Mammary epithelial cell (primary cell): ENCODE measurements at regions of chr5 and their contacts with region 1.

Region 1: GRCh38 chr5:74240786-74241750 is 399.5 kb downstream of the ENC1 start:
- DNase-seq: peak; percentile 100
- H3K4me3 ChIP-seq: peak overlapping the region in 2 of 3 experiments; percentile 3 to 11
- H3K27ac ChIP-seq: peak overlapping the region; percentile 96
- H3K4me1 ChIP-seq: peaks cover 39% of the 10 kb centered on the region
- H3K27me3 ChIP-seq: no peaks in the 10 kb centered on the region
- CTCF ChIP-seq: no peak

Region 2: GRCh38 chr5:74127381-74128320 is 113.4 kb before region 1 on chr5:
- CTCF ChIA-PET with region 1: no interaction called
- dilution Hi-C with region 1: no loop called
- in situ Hi-C with region 1: no loop called
- intact Hi-C with region 1: no loop called
- DNase-seq: peak; percentile 48
- H3K4me3 ChIP-seq: peak overlapping the region in 2 of 3 experiments; percentile 15 to 27
- H3K27ac ChIP-seq: no peak overlapping the region
- H3K4me1 ChIP-seq: peaks cover 15% of the 10 kb centered on the region
- H3K27me3 ChIP-seq: no peaks in the 10 kb centered on the region
- CTCF ChIP-seq: peak; percentile 46 to 62

Region 3: DNA sequence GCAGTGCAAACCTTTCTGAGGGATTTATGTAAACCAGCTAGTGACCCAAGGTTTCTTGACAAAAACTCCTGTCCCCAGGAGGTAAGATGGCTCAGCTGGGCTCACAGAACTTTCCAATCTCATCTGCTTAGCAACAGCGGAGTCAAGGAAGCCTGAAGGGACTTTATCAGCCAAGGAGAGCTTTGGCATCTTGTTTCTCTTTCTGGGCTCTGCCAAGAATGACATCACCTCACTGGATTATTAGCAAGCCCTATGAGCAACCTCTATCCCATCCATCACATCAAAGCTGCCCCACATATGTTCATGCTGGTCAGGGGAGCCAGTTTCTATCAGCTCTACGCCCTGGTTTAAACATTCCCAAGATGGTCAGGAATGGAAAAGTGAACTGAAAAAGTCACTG is 61.9 kb before region 1 on chr5:
- CTCF ChIA-PET with region 1: no interaction called
- dilution Hi-C with region 1: no loop called
- in situ Hi-C with region 1: no loop called
- intact Hi-C with region 1: no loop called
- DNase-seq: peak; percentile 62
- H3K4me3 ChIP-seq: no peak overlapping the region
- H3K27ac ChIP-seq: no peak overlapping the region
- H3K4me1 ChIP-seq: no peaks in the 10 kb centered on the region
- H3K27me3 ChIP-seq: no peaks in the 10 kb centered on the region
- CTCF ChIP-seq: no peak

Region 4: DNA sequence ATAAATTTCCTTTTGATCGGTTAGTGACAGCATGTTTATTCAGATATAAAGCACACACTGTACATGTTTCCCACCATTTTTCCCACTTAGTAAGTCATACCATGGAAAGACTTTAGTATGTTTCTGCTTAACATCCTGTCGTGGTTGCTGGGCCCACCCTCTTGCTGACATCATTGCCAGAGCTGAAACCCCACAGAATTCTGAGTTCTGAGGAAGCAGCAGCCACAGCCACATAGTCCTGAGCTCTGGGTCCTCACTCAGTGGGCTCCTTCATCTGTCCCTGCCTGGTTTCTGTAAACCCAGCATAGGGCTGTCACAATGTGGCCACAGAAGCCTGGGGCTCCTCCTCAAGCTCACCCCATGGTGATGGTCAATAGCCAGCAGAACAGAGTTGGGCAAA is 42.1 kb before region 1 on chr5:
- CTCF ChIA-PET with region 1: no interaction called
- dilution Hi-C with region 1: no loop called
- in situ Hi-C with region 1: no loop called
- intact Hi-C with region 1: loop called (anchors 2 kb)
- DNase-seq: no peak
- H3K4me3 ChIP-seq: no peak overlapping the region
- H3K27ac ChIP-seq: no peak overlapping the region
- H3K4me1 ChIP-seq: peaks cover 33% of the 10 kb centered on the region
- H3K27me3 ChIP-seq: no peaks in the 10 kb centered on the region
- CTCF ChIP-seq: no peak

Region 5: GRCh38 chr5:74272024-74272775 is 31.1 kb after region 1 on chr5:
- CTCF ChIA-PET with region 1: no interaction called
- dilution Hi-C with region 1: no loop called
- in situ Hi-C with region 1: no loop called
- intact Hi-C with region 1: loop called (anchors 2 kb)
- DNase-seq: peak; percentile 42
- H3K4me3 ChIP-seq: no peak overlapping the region
- H3K27ac ChIP-seq: no peak overlapping the region
- H3K4me1 ChIP-seq: peaks cover 12% of the 10 kb centered on the region
- H3K27me3 ChIP-seq: no peaks in the 10 kb centered on the region
- CTCF ChIP-seq: no peak